ENCODE measurements at regions of chr1 and their contacts with region 1.

Region 1: GRCh38 chr1:59699227-59699847 is 115.4 kb upstream of the HOOK1 start:
- DNase-seq: no peak
- ATAC-seq: no peak
- H3K4me3 Mint-ChIP-seq: no peak overlapping the region
- H3K27ac Mint-ChIP-seq: no peak overlapping the region
- H3K4me1 Mint-ChIP-seq: peaks cover 27% of the 10 kb centered on the region
- H3K27me3 Mint-ChIP-seq: no peaks in the 10 kb centered on the region

Region 2: DNA sequence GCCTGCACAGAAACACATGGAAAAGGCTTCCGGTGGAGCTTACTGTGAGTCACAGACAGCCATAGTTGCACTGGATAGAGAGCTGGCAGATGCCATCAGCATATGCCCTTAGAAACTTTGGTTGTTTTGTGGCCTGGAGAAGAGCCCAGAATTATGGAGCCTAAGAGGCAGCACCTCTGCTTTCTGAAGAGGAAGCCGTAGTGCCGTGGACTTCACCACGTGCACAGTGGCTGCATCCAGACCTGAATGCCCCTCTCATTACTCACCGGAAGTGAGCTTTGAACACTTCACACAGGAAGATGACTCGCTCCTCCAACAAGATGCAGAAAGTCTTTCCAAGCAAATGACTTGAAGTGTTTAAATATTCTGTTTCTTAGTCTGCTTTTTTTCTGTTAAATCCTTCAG is 943.9 kb before region 1 on chr1:
- CTCF ChIA-PET with region 1: interaction called, 14 read pairs
- DNase-seq: peak; percentile 85
- ATAC-seq: peak; percentile 84
- H3K4me3 Mint-ChIP-seq: peak overlapping the region; percentile 11
- H3K27ac Mint-ChIP-seq: peak overlapping the region; percentile 85
- H3K4me1 Mint-ChIP-seq: peaks cover 45% of the 10 kb centered on the region
- H3K27me3 Mint-ChIP-seq: peaks cover 3% of the 10 kb centered on the region

Region 3: DNA sequence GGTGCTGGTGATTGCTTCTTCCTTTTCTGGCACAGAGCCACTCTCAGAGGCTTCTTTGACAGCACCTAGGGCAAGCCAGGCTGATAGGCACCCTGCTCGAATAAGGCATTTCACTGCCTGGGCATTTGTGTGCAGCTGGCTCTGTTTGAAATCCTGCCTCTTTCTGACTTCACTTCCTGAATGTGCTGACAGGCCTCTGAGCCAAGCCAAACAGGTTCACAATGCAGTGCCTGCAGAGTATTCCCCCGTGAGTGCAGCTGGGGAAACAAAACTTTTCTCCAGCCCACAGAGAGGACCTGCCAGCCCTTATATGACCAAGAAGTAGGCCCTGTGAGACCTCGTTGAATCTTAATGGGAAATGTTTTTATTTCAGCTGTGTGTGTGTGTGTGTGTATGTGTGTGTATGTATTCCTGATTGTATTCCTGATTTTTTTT is 925.9 kb before region 1 on chr1:
- CTCF ChIA-PET with region 1: interaction called, 10 read pairs
- DNase-seq: no peak
- ATAC-seq: peak; percentile 10
- H3K4me3 Mint-ChIP-seq: no peak overlapping the region
- H3K27ac Mint-ChIP-seq: no peak overlapping the region
- H3K4me1 Mint-ChIP-seq: peaks cover 16% of the 10 kb centered on the region
- H3K27me3 Mint-ChIP-seq: no peaks in the 10 kb centered on the region

Region 4: GRCh38 chr1:58783993-58784757 is 915.2 kb before region 1 on chr1 and contains the start of gene JUN:
- CTCF ChIA-PET with region 1: interaction called, 39 read pairs
- DNase-seq: peak; percentile 99
- ATAC-seq: peak; percentile 73
- H3K4me3 Mint-ChIP-seq: peak within 1 kb of the TSS; percentile 86
- H3K27ac Mint-ChIP-seq: peak within 1 kb of the TSS; percentile 94
- H3K4me1 Mint-ChIP-seq: peaks cover 14% of the 10 kb centered on the region
- H3K27me3 Mint-ChIP-seq: peaks cover 4% of the 10 kb centered on the region
- total RNA-seq, gene JUN: 50.5 to 129 TPM

Region 5: DNA sequence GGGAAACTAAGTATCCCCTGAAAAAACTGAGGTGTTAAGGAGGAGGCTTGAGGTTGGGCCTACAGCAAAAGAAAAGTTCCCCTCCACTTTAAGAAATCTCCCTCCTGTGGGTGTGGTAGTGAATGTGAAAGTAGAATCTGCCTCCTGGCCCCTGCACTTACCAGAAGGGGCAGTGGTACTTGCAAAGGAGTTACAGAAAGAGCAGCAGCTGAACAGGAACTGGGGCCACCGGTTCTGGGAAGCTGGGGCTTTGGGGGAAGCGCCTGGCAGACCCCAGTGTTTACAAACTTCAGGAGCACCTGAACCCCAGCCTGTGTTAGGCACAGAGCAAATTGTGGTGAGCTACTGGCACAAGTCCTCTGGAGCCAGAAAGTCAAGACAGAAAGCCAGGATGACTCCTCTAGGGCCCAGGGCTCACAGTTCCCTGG is 652.6 kb before region 1 on chr1:
- CTCF ChIA-PET with region 1: interaction called, 11 read pairs
- DNase-seq: peak; percentile 78
- ATAC-seq: peak; percentile 90
- H3K4me3 Mint-ChIP-seq: peak overlapping the region; percentile 41
- H3K27ac Mint-ChIP-seq: peak overlapping the region; percentile 89
- H3K4me1 Mint-ChIP-seq: peaks cover 38% of the 10 kb centered on the region
- H3K27me3 Mint-ChIP-seq: no peaks in the 10 kb centered on the region

Region 6: GRCh38 chr1:59609245-59609644 is 90.1 kb before region 1 on chr1:
- CTCF ChIA-PET with region 1: no interaction called
- DNase-seq: no peak
- ATAC-seq: no peak
- H3K4me3 Mint-ChIP-seq: no peak overlapping the region
- H3K27ac Mint-ChIP-seq: no peak overlapping the region
- H3K4me1 Mint-ChIP-seq: no peaks in the 10 kb centered on the region
- H3K27me3 Mint-ChIP-seq: no peaks in the 10 kb centered on the region

Region 7: GRCh38 chr1:59759156-59759925 is 60.0 kb after region 1 on chr1:
- CTCF ChIA-PET with region 1: interaction called, 13 read pairs
- DNase-seq: peak; percentile 78
- ATAC-seq: peak; percentile 94
- H3K4me3 Mint-ChIP-seq: peak overlapping the region; percentile 20
- H3K27ac Mint-ChIP-seq: no peak overlapping the region
- H3K4me1 Mint-ChIP-seq: peaks cover 9% of the 10 kb centered on the region
- H3K27me3 Mint-ChIP-seq: no peaks in the 10 kb centered on the region